ENCODE measurements at regions of chr6 and their contacts with region 1.

Region 1: GRCh38 chr6:136249811-136250685 is at the start of gene MTFR2:
- DNase-seq: peak; percentile 100
- ATAC-seq: peak; percentile 93
- H3K4me3 ChIP-seq: peak within 1 kb of the TSS; percentile 86 to 96 (median 88)
- H3K27ac ChIP-seq: peak within 1 kb of the TSS; percentile 57
- H3K4me1 ChIP-seq: peaks cover 19% of the 10 kb centered on the region
- H3K27me3 ChIP-seq: no peaks in the 10 kb centered on the region; a peak in 1 of 5 replicates
- CTCF ChIP-seq: peak; percentile 51
- EP300 ChIP-seq: peak in 1 of 2 experiments; percentile 26; a peak in 1 of 4 replicates
- POLR2A ChIP-seq: peak; percentile 89 to 92
- RAD21 ChIP-seq: peak; percentile 27
- total RNA-seq, gene MTFR2: 10.7 and 12.5 TPM in 2 replicates

Region 2: GRCh38 chr6:135909737-135910387 is 340.2 kb before region 1 on chr6:
- CTCF ChIA-PET with region 1: no interaction called
- POLR2A ChIA-PET with region 1: no interaction called
- in situ Hi-C with region 1: no loop called
- intact Hi-C with region 1: no loop called
- DNase-seq: peak; percentile 70
- ATAC-seq: peak; percentile 97
- H3K4me3 ChIP-seq: no peak overlapping the region
- H3K27ac ChIP-seq: no peak overlapping the region
- H3K4me1 ChIP-seq: no peaks in the 10 kb centered on the region
- H3K27me3 ChIP-seq: 0 out of 5 replicates have a peak, but pooled peaks cover 0 to 7% of the 10 kb centered on the region in 2 experiments
- CTCF ChIP-seq: peak; percentile 81
- EP300 ChIP-seq: no peak
- POLR2A ChIP-seq: no peak
- RAD21 ChIP-seq: peak; percentile 54; the same call in 1 of the 2 replicates

Region 3: DNA sequence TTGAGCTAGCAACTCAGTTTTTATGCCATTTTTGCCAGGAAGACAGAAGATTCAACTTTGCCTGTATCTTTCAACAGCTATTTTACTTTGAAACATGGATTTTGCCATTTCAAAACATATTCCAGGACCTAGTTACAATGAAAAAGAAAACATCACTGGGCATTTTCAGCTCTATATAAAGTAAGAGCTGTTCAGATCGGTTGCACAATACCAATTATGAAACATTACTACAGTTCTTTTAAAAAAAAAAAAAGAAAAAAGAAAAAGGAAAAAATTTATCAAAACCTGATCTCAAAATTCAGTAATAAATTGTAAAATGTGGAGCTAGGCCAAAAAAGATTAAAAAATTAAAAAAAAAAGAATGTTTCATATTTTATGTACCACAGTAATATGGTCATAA is 24.0 kb after region 1 on chr6:
- CTCF ChIA-PET with region 1: no interaction called
- POLR2A ChIA-PET with region 1: interaction called, 3 read pairs
- in situ Hi-C with region 1: no loop called
- intact Hi-C with region 1: loop called (anchors 2 kb)
- DNase-seq: no peak
- ATAC-seq: no peak
- H3K4me3 ChIP-seq: no peak overlapping the region
- H3K27ac ChIP-seq: no peak overlapping the region
- H3K4me1 ChIP-seq: no peaks in the 10 kb centered on the region
- H3K27me3 ChIP-seq: no peaks in the 10 kb centered on the region
- CTCF ChIP-seq: no peak
- EP300 ChIP-seq: no peak
- POLR2A ChIP-seq: no peak
- RAD21 ChIP-seq: no peak

Region 4: GRCh38 chr6:136317021-136317694 is 67.1 kb after region 1 on chr6:
- CTCF ChIA-PET with region 1: no interaction called
- POLR2A ChIA-PET with region 1: no interaction called
- in situ Hi-C with region 1: no loop called
- intact Hi-C with region 1: loop called (anchors 2 kb)
- DNase-seq: peak; percentile 62
- ATAC-seq: peak; percentile 95
- H3K4me3 ChIP-seq: no peak overlapping the region
- H3K27ac ChIP-seq: no peak overlapping the region
- H3K4me1 ChIP-seq: no peaks in the 10 kb centered on the region
- H3K27me3 ChIP-seq: no peaks in the 10 kb centered on the region; a peak in 2 of 5 replicates
- CTCF ChIP-seq: peak; percentile 86
- EP300 ChIP-seq: no peak
- POLR2A ChIP-seq: no peak
- RAD21 ChIP-seq: peak; percentile 69